CD4-positive, alpha-beta T cell (primary cell): ENCODE measurements at regions of chr2 and their contacts with region 1.

Region 1: GRCh38 chr2:60794277-60794863 is 38.3 kb downstream of the PAPOLG start:
- DNase-seq: peak in 3 of 14 experiments; percentile 55 to 61 (median 58)
- ATAC-seq: peak; percentile 57
- H3K4me3 ChIP-seq: no peak overlapping the region
- H3K4me3 Mint-ChIP-seq: no peak overlapping the region
- H3K27ac ChIP-seq: no peak overlapping the region
- H3K27ac Mint-ChIP-seq: no peak overlapping the region
- H3K4me1 ChIP-seq: no peaks in the 10 kb centered on the region
- H3K4me1 Mint-ChIP-seq: peaks cover 7% of the 10 kb centered on the region
- H3K27me3 ChIP-seq: no peaks in the 10 kb centered on the region
- H3K27me3 Mint-ChIP-seq: no peaks in the 10 kb centered on the region
- CTCF ChIP-seq: peak; percentile 65

Region 2: DNA sequence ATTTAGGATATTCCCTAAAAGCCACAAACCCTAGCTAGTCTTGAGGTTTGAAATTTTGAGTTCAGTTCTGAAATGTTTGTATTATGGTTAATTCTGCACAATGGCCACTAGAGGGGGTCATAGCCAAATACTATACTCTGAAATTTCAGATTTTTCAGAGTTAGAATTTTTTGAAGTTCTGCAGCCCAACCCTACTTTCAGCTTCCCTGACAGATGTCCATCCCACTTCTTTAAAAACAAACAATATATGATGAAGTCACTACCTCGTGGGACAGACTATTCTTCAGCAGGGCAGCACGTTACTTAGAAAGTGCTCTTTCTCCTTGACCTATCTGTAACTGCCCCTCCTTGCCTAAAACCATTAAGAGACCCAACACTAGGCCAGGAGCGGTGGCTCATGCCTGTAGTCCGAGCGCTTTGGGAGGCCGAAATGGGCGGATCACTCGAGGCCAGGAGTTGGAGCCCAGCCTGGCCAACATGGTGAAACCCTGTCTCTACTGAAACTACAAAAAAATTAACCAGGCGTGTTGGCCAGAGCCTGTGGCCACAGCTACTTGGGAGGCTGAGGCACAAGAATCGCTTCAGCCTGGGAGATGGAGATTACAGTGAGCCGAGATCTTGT is 86.5 kb before region 1 on chr2:
- CTCF ChIA-PET with region 1: no interaction called
- POLR2A ChIA-PET with region 1: no interaction called
- intact Hi-C with region 1: loop called in 1 of 2 experiments (anchors 10 kb)
- DNase-seq: peak in 3 of 14 experiments; percentile 49 to 62 (median 54)
- ATAC-seq: peak; percentile 59
- H3K4me3 ChIP-seq: no peak overlapping the region
- H3K4me3 Mint-ChIP-seq: no peak overlapping the region
- H3K27ac ChIP-seq: no peak overlapping the region
- H3K27ac Mint-ChIP-seq: no peak overlapping the region
- H3K4me1 ChIP-seq: no peaks in the 10 kb centered on the region
- H3K4me1 Mint-ChIP-seq: no peaks in the 10 kb centered on the region
- H3K27me3 ChIP-seq: no peaks in the 10 kb centered on the region
- H3K27me3 Mint-ChIP-seq: peaks cover 6% of the 10 kb centered on the region
- CTCF ChIP-seq: peak; percentile 80

Region 3: DNA sequence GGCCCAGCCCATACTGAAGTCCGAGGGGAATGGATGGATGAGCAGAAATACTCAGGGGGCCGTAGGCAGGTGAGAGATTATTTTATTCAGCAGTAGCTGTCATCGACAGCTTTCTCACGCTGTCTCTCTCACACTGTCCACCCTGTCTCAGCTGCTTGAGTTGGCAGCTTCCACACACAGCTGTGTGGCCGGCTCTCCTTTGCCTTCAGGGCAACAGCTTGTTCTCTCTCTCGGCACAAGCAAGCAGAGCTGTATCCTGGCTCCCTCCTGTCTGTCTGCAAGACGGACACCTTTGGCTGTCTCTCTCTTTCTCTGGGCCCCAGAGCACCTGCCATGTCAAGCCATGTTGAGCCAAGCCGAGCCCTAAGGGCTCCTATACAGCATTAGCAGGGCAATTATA is 48.1 kb before region 1 on chr2:
- CTCF ChIA-PET with region 1: no interaction called
- POLR2A ChIA-PET with region 1: no interaction called
- intact Hi-C with region 1: no loop called
- DNase-seq: no peak
- ATAC-seq: no peak
- H3K4me3 ChIP-seq: no peak overlapping the region
- H3K4me3 Mint-ChIP-seq: no peak overlapping the region
- H3K27ac ChIP-seq: no peak overlapping the region
- H3K27ac Mint-ChIP-seq: no peak overlapping the region
- H3K4me1 ChIP-seq: peaks cover 13% of the 10 kb centered on the region
- H3K4me1 Mint-ChIP-seq: peaks cover 12% of the 10 kb centered on the region
- H3K27me3 ChIP-seq: no peaks in the 10 kb centered on the region
- H3K27me3 Mint-ChIP-seq: no peaks in the 10 kb centered on the region
- CTCF ChIP-seq: no peak

Region 4: GRCh38 chr2:61135510-61135909 is 341.1 kb after region 1 on chr2:
- CTCF ChIA-PET with region 1: no interaction called
- POLR2A ChIA-PET with region 1: no interaction called
- intact Hi-C with region 1: no loop called
- DNase-seq: peak in 4 of 14 experiments; percentile 13 to 36 (median 34)
- ATAC-seq: no peak
- H3K4me3 ChIP-seq: no peak overlapping the region
- H3K4me3 Mint-ChIP-seq: no peak overlapping the region
- H3K27ac ChIP-seq: no peak overlapping the region
- H3K27ac Mint-ChIP-seq: no peak overlapping the region
- H3K4me1 ChIP-seq: no peaks in the 10 kb centered on the region
- H3K4me1 Mint-ChIP-seq: no peaks in the 10 kb centered on the region
- H3K27me3 ChIP-seq: no peaks in the 10 kb centered on the region
- H3K27me3 Mint-ChIP-seq: no peaks in the 10 kb centered on the region
- CTCF ChIP-seq: peak; percentile 59